Activated CD4-positive, alpha-beta T cell treated with anti-CD3 and anti-CD28 coated beads, Interleukin-2, amount 10 ng/mL, durations not matched to agents 24 days and 14 days (primary cell): ENCODE measurements at regions of chr19 and their contacts with region 1.

Region 1: GRCh38 chr19:32674959-32675719 is at the start of gene ANKRD27:
- DNase-seq: peak; percentile 100
- H3K4me3 Mint-ChIP-seq: peak within 1 kb of the TSS; percentile 95
- H3K27ac Mint-ChIP-seq: peak within 1 kb of the TSS; percentile 88
- H3K4me1 Mint-ChIP-seq: peaks cover 24% of the 10 kb centered on the region
- H3K27me3 Mint-ChIP-seq: peaks cover 28% of the 10 kb centered on the region
- total RNA-seq, gene ANKRD27: 34.2 and 35.1 TPM in 2 replicates

Region 2: GRCh38 chr19:31350701-31351068 is 1324.5 kb before region 1 on chr19:
- intact Hi-C with region 1: loop called (anchors 10 kb)
- DNase-seq: peak; percentile 81
- H3K4me3 Mint-ChIP-seq: peak overlapping the region; percentile 89
- H3K27ac Mint-ChIP-seq: no peak overlapping the region
- H3K4me1 Mint-ChIP-seq: peaks cover 31% of the 10 kb centered on the region
- H3K27me3 Mint-ChIP-seq: peaks cover 69% of the 10 kb centered on the region

Region 3: DNA sequence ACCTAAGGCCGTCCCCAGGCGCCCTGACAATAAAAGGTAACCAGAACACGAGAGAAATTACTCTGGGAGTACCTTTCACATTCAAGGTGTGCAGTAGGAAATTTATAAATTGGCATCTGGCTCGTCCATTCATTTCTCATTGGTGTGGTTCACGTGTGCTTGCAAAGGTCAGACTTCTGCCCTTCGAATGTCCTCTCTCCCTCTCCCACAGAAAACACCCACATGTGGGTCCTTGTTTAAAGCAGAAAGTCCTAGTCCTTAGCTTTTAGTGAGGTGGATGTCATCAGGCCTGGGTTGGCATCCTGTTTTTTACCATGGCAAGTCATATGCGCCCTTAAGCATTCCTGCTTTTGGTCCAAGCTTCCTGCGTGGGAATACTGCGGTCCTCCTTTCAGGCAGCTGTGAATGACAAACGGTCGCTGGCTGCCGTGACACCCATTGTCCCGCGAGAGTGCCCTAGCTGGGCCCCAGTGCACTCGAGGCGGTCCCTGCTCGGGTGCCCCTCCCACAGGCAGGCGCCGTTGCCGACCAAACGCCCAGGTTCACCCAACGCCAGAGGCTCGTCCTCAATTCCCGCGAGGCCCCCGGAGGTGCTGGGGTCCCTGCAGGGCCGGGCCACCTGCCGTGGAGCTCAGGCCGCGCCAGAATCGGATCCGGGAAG is 16.3 kb after region 1 on chr19 and contains the start of gene NUDT19:
- intact Hi-C with region 1: loop called (anchors 1 kb)
- DNase-seq: peak; percentile 94
- H3K4me3 Mint-ChIP-seq: peak within 1 kb of the TSS; percentile 94
- H3K27ac Mint-ChIP-seq: peak within 1 kb of the TSS; percentile 97
- H3K4me1 Mint-ChIP-seq: peaks cover 44% of the 10 kb centered on the region
- H3K27me3 Mint-ChIP-seq: no peaks in the 10 kb centered on the region
- total RNA-seq, gene NUDT19: 25.3 and 25.9 TPM in 2 replicates

Region 4: DNA sequence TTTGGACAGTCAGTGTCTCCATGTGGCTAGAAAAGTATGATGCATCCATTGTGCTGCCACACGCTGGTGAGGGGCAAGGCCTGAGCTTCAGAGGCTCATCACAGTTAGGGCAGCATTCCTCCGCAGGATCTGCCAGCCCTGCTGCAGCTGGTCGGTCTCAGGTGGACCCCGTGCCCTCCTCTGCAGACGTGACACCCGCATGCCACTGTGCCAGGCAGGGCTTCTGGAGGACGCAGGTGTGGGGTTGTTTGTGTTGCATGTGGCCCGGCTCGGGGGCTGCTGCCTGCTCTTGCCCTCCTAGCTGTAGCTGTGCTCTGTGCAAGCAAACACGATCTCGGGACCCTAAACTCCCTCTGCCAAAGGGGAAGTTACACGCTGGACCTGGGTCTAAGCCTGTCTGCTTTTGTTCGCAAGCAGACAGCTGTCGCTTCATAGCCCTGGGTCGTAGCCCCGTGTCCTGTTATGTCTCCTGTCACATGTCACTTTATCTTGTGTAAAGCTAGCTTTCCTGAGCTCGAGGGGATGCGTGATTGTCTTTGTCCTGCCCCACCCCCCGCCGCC is 149.1 kb after region 1 on chr19:
- intact Hi-C with region 1: no loop called
- DNase-seq: no peak
- H3K4me3 Mint-ChIP-seq: no peak overlapping the region
- H3K27ac Mint-ChIP-seq: no peak overlapping the region
- H3K4me1 Mint-ChIP-seq: peaks cover 4% of the 10 kb centered on the region
- H3K27me3 Mint-ChIP-seq: peaks cover 22% of the 10 kb centered on the region

Region 5: GRCh38 chr19:33080761-33081681 is 405.9 kb after region 1 on chr19 and contains the start of gene GPATCH1:
- intact Hi-C with region 1: loop called (anchors 5 kb)
- DNase-seq: peak; percentile 97
- H3K4me3 Mint-ChIP-seq: peak within 1 kb of the TSS; percentile 98
- H3K27ac Mint-ChIP-seq: peak within 1 kb of the TSS; percentile 97
- H3K4me1 Mint-ChIP-seq: peaks cover 25% of the 10 kb centered on the region
- H3K27me3 Mint-ChIP-seq: no peaks in the 10 kb centered on the region
- total RNA-seq, gene GPATCH1: 11.7 and 12.9 TPM in 2 replicates

Region 6: GRCh38 chr19:33795370-33796163 is 1120.4 kb after region 1 on chr19:
- intact Hi-C with region 1: loop called (anchors 5 kb)
- DNase-seq: peak; percentile 87
- H3K4me3 Mint-ChIP-seq: peak overlapping the region; percentile 79
- H3K27ac Mint-ChIP-seq: peak overlapping the region; percentile 77
- H3K4me1 Mint-ChIP-seq: peaks cover 1% of the 10 kb centered on the region
- H3K27me3 Mint-ChIP-seq: peaks cover 38% of the 10 kb centered on the region